ENCODE measurements at regions of chr5 and their contacts with region 1.

Region 1: GRCh38 chr5:35617435-35618303 is at the start of gene SPEF2:
- DNase-seq: peak; percentile 89
- H3K4me3 Mint-ChIP-seq: peak within 1 kb of the TSS; percentile 77
- H3K27ac Mint-ChIP-seq: peak within 1 kb of the TSS; percentile 83
- H3K4me1 Mint-ChIP-seq: peaks cover 34% of the 10 kb centered on the region
- H3K27me3 Mint-ChIP-seq: peaks cover 1% of the 10 kb centered on the region
- total RNA-seq, gene SPEF2: 10.6 to 13.0 TPM

Region 2: DNA sequence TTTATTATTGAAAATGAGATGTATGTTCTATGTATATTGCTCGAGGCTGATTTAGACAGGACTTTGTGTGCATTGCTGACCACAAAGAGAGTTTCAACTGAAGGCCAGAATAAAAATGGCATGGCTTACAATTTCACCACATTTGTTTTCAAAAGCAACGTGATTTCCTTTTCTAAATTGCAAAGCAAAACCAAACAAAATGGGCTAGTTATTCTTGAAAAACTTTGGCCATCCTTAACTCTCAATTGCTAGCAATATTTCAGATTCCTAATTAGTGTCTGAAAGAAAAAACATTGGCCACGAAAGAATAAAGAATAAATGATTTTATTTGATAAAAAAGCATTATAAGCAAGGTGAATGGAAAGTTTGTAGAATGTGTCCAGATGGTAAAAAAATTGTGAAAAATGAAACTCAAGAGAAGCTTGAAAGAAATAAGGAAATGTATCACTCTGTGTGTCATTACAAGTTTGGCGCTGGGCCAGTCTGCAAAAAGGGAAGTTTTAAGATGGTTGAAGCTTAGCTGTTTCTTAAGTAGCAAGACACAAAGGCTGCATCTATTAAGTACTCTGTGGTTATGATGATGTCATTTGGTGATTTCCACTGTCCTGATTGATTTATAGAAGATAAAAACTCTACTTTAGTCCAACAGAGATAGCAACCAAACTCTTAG is 298.2 kb before region 1 on chr5:
- CTCF ChIA-PET with region 1: no interaction called
- POLR2A ChIA-PET with region 1: no interaction called
- intact Hi-C with region 1: loop called (anchors 5 kb)
- DNase-seq: peak; percentile 83
- H3K4me3 Mint-ChIP-seq: no peak overlapping the region
- H3K27ac Mint-ChIP-seq: peak overlapping the region; percentile 19
- H3K4me1 Mint-ChIP-seq: peaks cover 9% of the 10 kb centered on the region
- H3K27me3 Mint-ChIP-seq: peaks cover 16% of the 10 kb centered on the region

Region 3: GRCh38 chr5:35478856-35479682 is 138.6 kb before region 1 on chr5:
- CTCF ChIA-PET with region 1: no interaction called
- POLR2A ChIA-PET with region 1: no interaction called
- intact Hi-C with region 1: loop called (anchors 5 kb)
- DNase-seq: no peak
- H3K4me3 Mint-ChIP-seq: peak overlapping the region; percentile 57
- H3K27ac Mint-ChIP-seq: peak overlapping the region; percentile 78
- H3K4me1 Mint-ChIP-seq: peaks cover 9% of the 10 kb centered on the region
- H3K27me3 Mint-ChIP-seq: no peaks in the 10 kb centered on the region

Region 4: DNA sequence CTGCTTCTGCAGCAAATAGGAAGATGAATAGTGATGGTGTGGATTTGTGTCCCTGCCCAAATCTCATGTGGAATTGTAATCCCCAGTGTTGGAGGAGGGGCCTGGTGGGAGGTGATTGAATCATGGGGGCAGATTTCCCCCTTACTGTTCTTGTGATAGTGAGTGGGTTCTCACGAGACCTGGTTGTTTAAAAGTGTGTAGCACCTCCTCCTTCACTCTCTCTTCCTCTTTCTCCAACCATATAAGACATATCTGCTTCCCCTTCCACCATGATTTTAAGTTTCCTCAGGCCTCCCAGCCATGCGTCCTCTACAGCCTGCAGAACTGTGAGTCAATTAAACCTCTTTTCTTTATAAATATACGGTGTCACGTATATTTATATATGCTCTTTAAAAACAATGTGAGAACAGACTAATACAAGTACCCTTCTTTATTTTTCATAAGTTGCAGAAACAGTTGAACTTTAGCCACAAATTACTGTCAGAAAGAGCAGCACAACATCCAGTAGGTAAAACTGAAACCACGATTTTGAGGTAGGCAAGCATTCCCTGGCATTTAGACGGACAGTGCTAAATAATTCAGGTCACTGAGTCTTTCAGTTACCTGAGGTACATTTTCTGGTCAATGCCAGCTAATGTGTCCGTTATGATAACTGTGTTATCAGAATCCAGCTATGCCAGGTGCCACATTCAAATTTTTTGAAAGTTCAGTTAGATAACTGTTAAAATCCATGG is 79.3 kb before region 1 on chr5:
- CTCF ChIA-PET with region 1: no interaction called
- POLR2A ChIA-PET with region 1: no interaction called
- intact Hi-C with region 1: no loop called
- DNase-seq: no peak
- H3K4me3 Mint-ChIP-seq: no peak overlapping the region
- H3K27ac Mint-ChIP-seq: no peak overlapping the region
- H3K4me1 Mint-ChIP-seq: no peaks in the 10 kb centered on the region
- H3K27me3 Mint-ChIP-seq: no peaks in the 10 kb centered on the region

Region 5: DNA sequence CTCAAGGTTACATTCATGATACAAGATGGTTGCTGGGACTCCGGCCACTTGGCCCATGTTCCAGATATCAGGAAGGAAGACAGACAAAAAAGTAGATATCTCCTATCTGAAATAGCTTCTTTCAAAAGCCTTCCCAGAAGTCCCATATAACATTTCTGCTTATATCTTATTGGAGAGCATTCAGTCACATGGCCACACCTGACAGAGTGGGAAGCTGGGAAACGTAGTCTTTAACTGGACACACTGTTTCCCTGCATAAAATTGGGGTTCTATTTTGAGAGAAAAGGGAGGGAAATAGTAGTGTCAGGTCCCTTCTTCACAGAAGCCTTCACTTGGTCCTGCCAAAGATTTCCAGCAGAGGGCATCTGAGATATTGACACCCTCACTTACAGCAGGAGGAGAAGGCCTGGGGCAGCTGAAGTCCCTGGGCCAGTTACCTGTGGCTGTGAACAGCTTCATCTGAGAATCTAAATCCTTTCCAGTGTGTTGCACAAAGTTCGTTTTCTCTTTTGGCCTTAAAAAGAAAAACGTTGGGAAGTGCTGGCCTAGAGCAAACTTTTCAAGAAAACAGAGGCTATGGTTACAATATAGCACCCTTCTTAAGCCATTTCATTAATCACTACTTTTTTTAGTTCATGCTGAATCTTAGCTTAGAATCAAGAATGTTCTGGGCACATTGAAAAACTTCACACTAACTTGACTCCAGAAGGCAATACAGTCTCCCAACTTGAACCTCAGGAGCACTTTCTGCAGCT is 33.5 kb after region 1 on chr5:
- CTCF ChIA-PET with region 1: interaction called, 17 read pairs
- POLR2A ChIA-PET with region 1: no interaction called
- intact Hi-C with region 1: loop called (anchors 2 kb)
- DNase-seq: peak; percentile 74
- H3K4me3 Mint-ChIP-seq: no peak overlapping the region
- H3K27ac Mint-ChIP-seq: no peak overlapping the region
- H3K4me1 Mint-ChIP-seq: peaks cover 10% of the 10 kb centered on the region
- H3K27me3 Mint-ChIP-seq: no peaks in the 10 kb centered on the region

Region 6: DNA sequence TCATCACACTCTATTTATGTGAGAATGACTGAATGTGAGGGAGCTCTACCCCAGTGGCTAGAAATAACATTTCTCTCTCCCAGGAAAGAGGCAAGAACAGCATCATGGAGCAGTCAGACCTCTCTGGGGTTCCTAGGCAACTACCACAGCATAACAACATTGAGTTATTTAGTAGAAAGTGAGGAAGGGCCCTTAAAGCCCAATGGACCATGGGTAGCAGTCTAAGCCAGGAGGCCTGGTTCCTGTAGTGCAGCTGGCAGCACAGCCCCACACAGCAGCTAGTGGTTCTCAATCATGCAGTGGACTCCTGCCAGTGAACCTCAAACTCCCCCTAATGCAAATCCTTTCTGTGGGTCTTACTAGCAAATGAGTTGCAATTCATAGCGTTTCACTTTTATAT is 55.3 kb after region 1 on chr5:
- CTCF ChIA-PET with region 1: no interaction called
- POLR2A ChIA-PET with region 1: no interaction called
- intact Hi-C with region 1: loop called (anchors 2 kb)
- DNase-seq: peak; percentile 66
- H3K4me3 Mint-ChIP-seq: no peak overlapping the region
- H3K27ac Mint-ChIP-seq: peak overlapping the region; percentile 69
- H3K4me1 Mint-ChIP-seq: peaks cover 60% of the 10 kb centered on the region
- H3K27me3 Mint-ChIP-seq: no peaks in the 10 kb centered on the region

Region 7: GRCh38 chr5:35683466-35683865 is 65.8 kb after region 1 on chr5:
- CTCF ChIA-PET with region 1: no interaction called
- POLR2A ChIA-PET with region 1: no interaction called
- intact Hi-C with region 1: no loop called
- DNase-seq: no peak
- H3K4me3 Mint-ChIP-seq: no peak overlapping the region
- H3K27ac Mint-ChIP-seq: no peak overlapping the region
- H3K4me1 Mint-ChIP-seq: peaks cover 12% of the 10 kb centered on the region
- H3K27me3 Mint-ChIP-seq: no peaks in the 10 kb centered on the region

Region 8: GRCh38 chr5:35736280-35736679 is 118.6 kb after region 1 on chr5:
- CTCF ChIA-PET with region 1: no interaction called
- POLR2A ChIA-PET with region 1: no interaction called
- intact Hi-C with region 1: loop called (anchors 5 kb)
- DNase-seq: peak; percentile 68
- H3K4me3 Mint-ChIP-seq: no peak overlapping the region
- H3K27ac Mint-ChIP-seq: peak overlapping the region; percentile 77
- H3K4me1 Mint-ChIP-seq: peaks cover 47% of the 10 kb centered on the region
- H3K27me3 Mint-ChIP-seq: no peaks in the 10 kb centered on the region

Region 9: GRCh38 chr5:35822511-35822910 is 204.8 kb after region 1 on chr5:
- CTCF ChIA-PET with region 1: interaction called, 3 read pairs
- POLR2A ChIA-PET with region 1: no interaction called
- intact Hi-C with region 1: loop called (anchors 2 kb)
- DNase-seq: peak; percentile 64
- H3K4me3 Mint-ChIP-seq: peak overlapping the region; percentile 40
- H3K27ac Mint-ChIP-seq: peak overlapping the region; percentile 94
- H3K4me1 Mint-ChIP-seq: peaks cover 87% of the 10 kb centered on the region
- H3K27me3 Mint-ChIP-seq: no peaks in the 10 kb centered on the region